MCF 10A (cell line): ENCODE measurements at regions of chr5 and their contacts with region 1.

Region 1: DNA sequence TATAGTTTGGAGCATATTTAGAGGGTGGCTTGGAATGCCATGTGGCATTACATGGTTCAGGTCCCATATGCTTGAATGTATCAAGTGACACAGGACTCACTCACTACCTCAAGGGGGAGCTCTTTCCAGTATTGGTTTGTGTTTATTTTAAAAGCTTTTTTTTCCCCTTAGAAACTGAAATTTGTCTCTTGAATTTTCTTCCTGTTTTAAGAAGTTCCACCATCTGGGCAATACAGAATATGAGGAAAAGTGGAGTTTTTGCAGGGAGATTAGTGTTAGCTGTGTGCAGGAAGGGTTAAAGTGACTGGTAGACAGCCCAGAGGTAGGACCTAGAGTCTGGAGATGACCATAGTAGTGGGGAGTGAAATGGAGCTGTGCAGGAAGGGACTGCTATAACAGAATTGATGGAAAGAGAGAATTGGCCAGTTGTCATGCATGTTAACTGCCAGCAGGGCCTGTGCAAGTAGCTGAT is 36.6 kb downstream of the CTNNA1 start:
- DNase-seq: peak; percentile 71
- H3K4me3 Mint-ChIP-seq: no peak overlapping the region
- H3K27ac Mint-ChIP-seq: no peak overlapping the region
- H3K4me1 Mint-ChIP-seq: peaks cover 42% of the 10 kb centered on the region
- H3K27me3 Mint-ChIP-seq: no peaks in the 10 kb centered on the region
- CTCF ChIP-seq: peak; percentile 25

Region 2: GRCh38 chr5:138654281-138654867 is 135.4 kb before region 1 on chr5:
- CTCF ChIA-PET with region 1: interaction called, 10 read pairs
- POLR2A ChIA-PET with region 1: interaction called, 3 read pairs
- intact Hi-C with region 1: no loop called
- DNase-seq: no peak
- H3K4me3 Mint-ChIP-seq: no peak overlapping the region
- H3K27ac Mint-ChIP-seq: no peak overlapping the region
- H3K4me1 Mint-ChIP-seq: no peaks in the 10 kb centered on the region
- H3K27me3 Mint-ChIP-seq: no peaks in the 10 kb centered on the region
- CTCF ChIP-seq: no peak

Region 3: GRCh38 chr5:138760448-138761110 is 29.2 kb before region 1 on chr5:
- CTCF ChIA-PET with region 1: interaction called, 12 read pairs
- POLR2A ChIA-PET with region 1: interaction called, 5 read pairs
- intact Hi-C with region 1: no loop called
- DNase-seq: peak; percentile 37
- H3K4me3 Mint-ChIP-seq: no peak overlapping the region
- H3K27ac Mint-ChIP-seq: peak overlapping the region; percentile 86
- H3K4me1 Mint-ChIP-seq: peaks cover 60% of the 10 kb centered on the region
- H3K27me3 Mint-ChIP-seq: no peaks in the 10 kb centered on the region
- CTCF ChIP-seq: no peak

Region 4: GRCh38 chr5:138772986-138773594 is 16.7 kb before region 1 on chr5:
- CTCF ChIA-PET with region 1: interaction called, 25 read pairs
- POLR2A ChIA-PET with region 1: interaction called, 3 read pairs
- intact Hi-C with region 1: no loop called
- DNase-seq: no peak
- H3K4me3 Mint-ChIP-seq: no peak overlapping the region
- H3K27ac Mint-ChIP-seq: peak overlapping the region; percentile 4
- H3K4me1 Mint-ChIP-seq: peaks cover 18% of the 10 kb centered on the region
- H3K27me3 Mint-ChIP-seq: no peaks in the 10 kb centered on the region
- CTCF ChIP-seq: no peak

Region 5: GRCh38 chr5:138805096-138805495 is 15.3 kb after region 1 on chr5:
- CTCF ChIA-PET with region 1: interaction called, 13 read pairs
- POLR2A ChIA-PET with region 1: interaction called, 9 read pairs
- intact Hi-C with region 1: no loop called
- DNase-seq: no peak
- H3K4me3 Mint-ChIP-seq: no peak overlapping the region
- H3K27ac Mint-ChIP-seq: peak overlapping the region; percentile 28
- H3K4me1 Mint-ChIP-seq: peaks cover 20% of the 10 kb centered on the region
- H3K27me3 Mint-ChIP-seq: no peaks in the 10 kb centered on the region
- CTCF ChIP-seq: no peak

Region 6: DNA sequence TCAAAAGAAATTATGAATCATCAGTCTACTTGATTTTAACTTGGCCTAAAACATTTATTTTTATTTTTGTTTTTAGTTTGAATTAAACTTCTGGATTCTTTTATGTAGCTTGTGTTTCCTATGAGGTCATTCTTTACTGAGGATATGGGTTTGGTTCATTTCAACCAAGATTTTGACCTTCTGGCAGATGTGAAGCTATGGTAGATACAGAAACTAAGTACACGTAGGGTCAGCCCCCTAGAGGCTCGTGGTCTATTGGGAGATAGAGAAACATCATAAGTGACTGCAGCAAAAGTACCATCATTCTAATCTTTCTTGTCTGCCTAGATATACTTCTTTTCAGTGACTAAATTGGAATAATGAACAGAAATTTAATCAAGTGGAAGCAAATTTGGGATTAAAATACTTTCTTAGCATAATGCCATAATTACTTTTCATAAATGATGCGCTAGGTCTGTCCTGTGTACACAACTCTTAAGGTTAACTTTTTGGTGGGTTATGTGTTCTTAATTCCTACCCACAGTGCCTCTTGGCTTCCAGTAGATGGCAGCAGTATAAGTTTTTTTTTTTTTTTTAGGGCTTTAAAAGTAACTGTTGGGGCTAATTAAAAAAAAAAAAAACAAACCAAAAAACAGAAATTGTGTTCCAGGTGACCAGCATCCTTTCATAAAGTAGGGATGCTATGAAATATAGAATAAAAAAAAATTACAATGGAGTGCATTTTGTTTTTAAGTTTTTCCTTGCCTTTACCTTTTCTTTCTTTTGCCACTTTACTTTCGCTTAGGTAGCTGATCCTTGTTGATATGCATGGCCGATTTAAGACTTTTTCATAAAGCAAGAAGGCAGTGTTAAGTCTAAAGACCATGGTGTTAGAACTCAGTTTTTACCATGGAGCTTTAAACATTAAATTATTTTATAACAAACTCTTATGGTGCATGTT is 35.4 kb after region 1 on chr5:
- CTCF ChIA-PET with region 1: interaction called, 18 read pairs
- POLR2A ChIA-PET with region 1: interaction called, 5 read pairs
- intact Hi-C with region 1: no loop called
- DNase-seq: peak; percentile 24
- H3K4me3 Mint-ChIP-seq: no peak overlapping the region
- H3K27ac Mint-ChIP-seq: no peak overlapping the region
- H3K4me1 Mint-ChIP-seq: peaks cover 7% of the 10 kb centered on the region
- H3K27me3 Mint-ChIP-seq: no peaks in the 10 kb centered on the region
- CTCF ChIP-seq: peak; percentile 40